Adrenal gland (tissue), 19 donors: ENCODE measurements at regions of chr17 and their contacts with region 1.

Region 1: GRCh38 chr17:1516388-1517161 is at the start of gene INPP5K:
- DNase-seq: peak; percentile 97 to 99 (median 98)
- H3K4me3 ChIP-seq: peak within 1 kb of the TSS in 3 of 4 donors; percentile 65 to 83 (median 69)
- H3K27ac ChIP-seq: peak within 1 kb of the TSS; percentile 74 to 95 (median 84)
- H3K4me1 ChIP-seq: peaks cover 15 to 29% of the 10 kb centered on the region in 2 donors
- H3K27me3 ChIP-seq: no peaks in the 10 kb centered on the region
- CTCF ChIP-seq: peak in 1 of 6 experiments; percentile 20
- POLR2A ChIP-seq: peak; percentile 52 to 78
- total RNA-seq, gene INPP5K: 11.1 to 91.6 (median 37.7) TPM

Region 2: GRCh38 chr17:1153795-1154546 is 362.6 kb before region 1 on chr17:
- intact Hi-C with region 1: no loop called
- DNase-seq: peak; percentile 53 to 93 (median 62)
- H3K4me3 ChIP-seq: no peak overlapping the region
- H3K27ac ChIP-seq: peak overlapping the region in 2 of 5 donors; percentile 40 to 42
- H3K4me1 ChIP-seq: peaks cover 4 to 11% of the 10 kb centered on the region in 2 donors
- H3K27me3 ChIP-seq: no peaks in the 10 kb centered on the region
- CTCF ChIP-seq: no peak
- POLR2A ChIP-seq: no peak

Region 3: DNA sequence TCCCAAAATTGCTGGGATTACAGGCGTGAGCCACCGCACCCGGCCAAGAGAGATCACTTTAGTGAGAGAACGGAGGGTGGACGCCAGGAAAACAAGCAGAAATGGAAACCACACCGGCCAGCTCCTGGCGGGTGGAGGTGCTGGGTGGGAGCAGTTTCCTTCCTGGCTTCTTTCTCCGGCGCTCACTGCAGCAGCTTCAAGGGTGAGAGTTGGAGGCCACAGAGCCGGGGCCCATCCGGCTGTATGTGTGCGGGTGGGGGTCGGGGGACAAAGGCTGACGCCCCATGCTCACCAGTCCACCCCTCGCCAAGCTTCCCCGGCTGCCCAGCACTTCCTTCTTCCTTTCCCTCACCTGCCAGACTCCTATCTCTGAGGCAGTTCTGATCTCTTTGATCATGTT is 259.9 kb before region 1 on chr17:
- intact Hi-C with region 1: loop called in 1 of 2 experiments (anchors 5 kb)
- DNase-seq: no peak
- H3K4me3 ChIP-seq: no peak overlapping the region
- H3K27ac ChIP-seq: no peak overlapping the region
- H3K4me1 ChIP-seq: peaks cover 6 to 11% of the 10 kb centered on the region in 2 donors
- H3K27me3 ChIP-seq: no peaks in the 10 kb centered on the region
- CTCF ChIP-seq: no peak
- POLR2A ChIP-seq: no peak

Region 4: DNA sequence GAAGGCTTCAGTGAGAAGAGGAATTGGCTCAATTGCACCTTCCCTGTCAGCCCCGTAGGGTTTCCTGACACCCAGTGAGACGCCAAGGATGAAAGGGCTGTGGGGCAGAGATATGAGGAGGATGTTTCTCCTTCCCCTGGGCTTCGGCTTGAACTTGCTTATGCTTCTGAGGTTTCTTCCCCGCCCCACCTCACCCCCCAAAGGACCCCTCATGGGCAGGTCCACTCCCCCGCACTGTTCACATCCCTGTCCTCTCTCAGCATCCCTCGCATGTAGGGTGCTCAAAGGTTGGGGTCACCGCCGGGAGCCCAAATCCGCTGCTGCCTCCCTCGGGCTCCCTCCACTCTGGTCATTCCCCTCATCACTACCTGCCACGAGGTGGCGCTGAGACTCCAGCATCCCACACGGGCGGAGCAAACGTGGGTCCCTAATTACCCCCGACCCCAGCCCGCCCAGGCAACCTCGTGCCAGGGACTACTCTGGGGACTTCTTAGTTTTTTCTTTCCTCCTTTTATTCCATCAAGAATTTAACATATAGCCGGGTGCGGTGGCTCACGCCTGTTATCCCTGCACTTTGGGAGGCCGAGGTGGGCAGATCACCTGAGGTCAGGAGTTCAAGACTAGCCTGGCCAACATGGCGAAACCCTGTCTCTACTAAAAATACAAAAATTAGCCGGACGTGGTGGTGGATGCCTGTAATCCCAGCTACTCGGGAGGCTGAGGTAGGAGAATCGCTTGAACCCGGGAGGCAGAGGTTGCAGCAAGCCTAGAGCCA is 240.4 kb before region 1 on chr17:
- intact Hi-C with region 1: loop called in 1 of 2 experiments (anchors 10 kb)
- DNase-seq: peak; percentile 41 to 76 (median 61)
- H3K4me3 ChIP-seq: no peak overlapping the region
- H3K27ac ChIP-seq: no peak overlapping the region
- H3K4me1 ChIP-seq: no peaks in the 10 kb centered on the region
- H3K27me3 ChIP-seq: peaks cover 26% of the 10 kb centered on the region
- CTCF ChIP-seq: peak; percentile 52 to 81 (median 75)
- POLR2A ChIP-seq: no peak

Region 5: GRCh38 chr17:1365445-1366039 is 151.0 kb before region 1 on chr17:
- intact Hi-C with region 1: loop called (anchors 10 kb)
- DNase-seq: peak; percentile 53 to 85 (median 63)
- H3K4me3 ChIP-seq: no peak overlapping the region
- H3K27ac ChIP-seq: peak overlapping the region in 1 of 5 donors; percentile 25
- H3K4me1 ChIP-seq: peaks cover 30 to 69% of the 10 kb centered on the region in 2 donors
- H3K27me3 ChIP-seq: no peaks in the 10 kb centered on the region
- CTCF ChIP-seq: peak; percentile 82 to 89 (median 86)
- POLR2A ChIP-seq: no peak

Region 6: DNA sequence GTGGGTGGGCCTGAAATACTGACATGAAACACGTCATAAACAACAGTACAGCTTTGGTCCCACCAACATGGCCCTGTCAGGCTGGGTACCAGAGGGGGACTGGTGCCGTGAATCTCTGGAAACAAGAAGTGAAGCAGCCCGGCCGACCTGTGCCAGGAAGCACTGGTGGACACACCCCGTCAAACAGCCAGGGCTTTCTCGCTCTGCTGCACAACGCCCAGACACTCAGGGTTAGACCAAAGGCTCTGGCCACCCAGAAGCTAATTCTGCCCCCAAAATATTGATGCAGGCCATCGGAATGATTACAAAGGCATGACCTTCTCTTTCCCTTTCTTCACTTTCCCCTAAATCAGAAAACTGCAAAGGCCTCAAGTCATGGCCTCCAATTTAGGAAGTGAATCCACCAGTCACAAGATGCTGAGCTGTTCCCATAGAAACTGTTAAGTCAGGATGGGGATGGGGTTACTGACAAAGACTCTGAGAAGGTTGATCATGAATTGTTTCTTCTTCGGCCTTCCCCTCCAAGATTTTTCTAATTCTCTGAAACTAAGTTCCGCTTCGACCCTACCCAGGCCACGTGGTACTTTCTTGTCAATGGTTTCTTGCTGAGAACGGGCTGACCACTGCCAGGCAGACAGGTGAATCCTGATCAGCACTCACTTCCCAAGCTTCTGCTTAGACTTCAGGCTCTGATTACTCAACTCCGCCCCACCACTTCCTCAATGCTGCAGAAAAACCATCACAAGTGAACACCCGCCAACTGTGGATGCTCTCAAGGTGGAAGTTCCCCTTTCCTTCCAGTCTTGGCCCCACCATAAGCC is 39.3 kb after region 1 on chr17:
- intact Hi-C with region 1: loop called in 1 of 2 experiments (anchors 5 kb)
- DNase-seq: peak in 3 of 7 donors; percentile 40 to 63 (median 51)
- H3K4me3 ChIP-seq: no peak overlapping the region
- H3K27ac ChIP-seq: peak overlapping the region in 1 of 5 donors; percentile 58
- H3K4me1 ChIP-seq: peaks cover 11 to 36% of the 10 kb centered on the region in 2 donors
- H3K27me3 ChIP-seq: no peaks in the 10 kb centered on the region
- CTCF ChIP-seq: no peak
- POLR2A ChIP-seq: no peak

Region 7: GRCh38 chr17:1573916-1574696 is 57.5 kb after region 1 on chr17:
- intact Hi-C with region 1: no loop called
- DNase-seq: peak; percentile 79 to 93 (median 90)
- H3K4me3 ChIP-seq: no peak overlapping the region
- H3K27ac ChIP-seq: peak overlapping the region in 3 of 5 donors; percentile 41 to 90 (median 79)
- H3K4me1 ChIP-seq: peaks cover 16 to 43% of the 10 kb centered on the region in 2 donors
- H3K27me3 ChIP-seq: no peaks in the 10 kb centered on the region
- CTCF ChIP-seq: peak; percentile 87 to 97 (median 96)
- POLR2A ChIP-seq: no peak